ENCODE measurements at regions of chr2 and their contacts with region 1.

Region 1: GRCh38 chr2:32772638-32773447 is 145.0 kb downstream of the TTC27 start:
- DNase-seq: peak; percentile 48
- ATAC-seq: peak; percentile 87
- H3K4me3 ChIP-seq: no peak overlapping the region
- H3K27ac ChIP-seq: no peak overlapping the region
- H3K4me1 ChIP-seq: peaks cover 9% of the 10 kb centered on the region
- H3K27me3 ChIP-seq: no peaks in the 10 kb centered on the region
- CTCF ChIP-seq: peak; percentile 85
- EP300 ChIP-seq: no peak
- POLR2A ChIP-seq: no peak
- RAD21 ChIP-seq: peak; percentile 89

Region 2: GRCh38 chr2:33033606-33034081 is 260.8 kb after region 1 on chr2:
- CTCF ChIA-PET with region 1: no interaction called
- POLR2A ChIA-PET with region 1: no interaction called
- in situ Hi-C with region 1: loop called (anchors 5 kb)
- intact Hi-C with region 1: loop called (anchors 2 kb)
- DNase-seq: no peak
- ATAC-seq: peak; percentile 60; the same call in 2 of the 3 replicates
- H3K4me3 ChIP-seq: no peak overlapping the region
- H3K27ac ChIP-seq: no peak overlapping the region
- H3K4me1 ChIP-seq: no peaks in the 10 kb centered on the region
- H3K27me3 ChIP-seq: peaks cover 0 to 11% of the 10 kb centered on the region in 2 experiments; a peak in 1 of 5 replicates
- CTCF ChIP-seq: peak; percentile 31; the same call in 1 of the 2 replicates
- EP300 ChIP-seq: no peak
- POLR2A ChIP-seq: no peak
- RAD21 ChIP-seq: no peak

Region 3: DNA sequence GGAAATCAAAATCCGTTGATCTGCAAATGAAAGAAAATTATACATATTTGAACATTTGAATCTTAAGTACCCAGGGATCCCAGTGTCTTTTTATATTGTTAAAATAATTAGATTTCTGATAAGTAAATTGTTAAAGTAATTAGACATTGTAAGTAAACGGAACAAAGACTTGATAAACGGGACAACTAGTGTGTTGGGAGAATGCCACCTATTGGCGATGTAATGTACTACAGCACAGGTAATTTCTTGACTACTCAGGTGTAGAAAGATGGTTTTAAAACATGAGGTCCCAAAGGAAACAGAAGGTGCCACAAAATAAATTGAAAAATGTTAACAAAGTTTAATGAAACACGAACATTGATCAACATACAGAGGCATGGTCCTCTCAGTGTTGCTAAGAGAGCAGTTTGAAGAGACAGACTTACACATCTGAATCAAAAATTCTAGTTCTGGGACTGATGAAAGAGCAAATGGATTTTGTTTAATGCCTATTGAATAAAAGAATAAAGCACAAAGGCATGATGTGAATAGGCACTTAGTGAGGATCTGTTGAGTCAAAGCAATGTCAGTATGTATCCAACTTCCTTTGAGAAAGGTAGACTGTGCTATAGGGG is 600.2 kb after region 1 on chr2:
- CTCF ChIA-PET with region 1: interaction called, 13 read pairs
- POLR2A ChIA-PET with region 1: no interaction called
- in situ Hi-C with region 1: loop called (anchors 5 kb)
- intact Hi-C with region 1: loop called (anchors 1 kb)
- DNase-seq: peak; percentile 45
- ATAC-seq: peak; percentile 66
- H3K4me3 ChIP-seq: no peak overlapping the region
- H3K27ac ChIP-seq: no peak overlapping the region
- H3K4me1 ChIP-seq: no peaks in the 10 kb centered on the region
- H3K27me3 ChIP-seq: peaks cover 0 to 3% of the 10 kb centered on the region in 2 experiments; a peak in 1 of 5 replicates
- CTCF ChIP-seq: peak; percentile 80
- EP300 ChIP-seq: no peak
- POLR2A ChIP-seq: no peak
- RAD21 ChIP-seq: peak; percentile 35; the same call in 1 of the 2 replicates

Region 4: GRCh38 chr2:33583194-33583938 is 810.5 kb after region 1 on chr2:
- CTCF ChIA-PET with region 1: no interaction called
- POLR2A ChIA-PET with region 1: no interaction called
- in situ Hi-C with region 1: loop called (anchors 25 kb)
- intact Hi-C with region 1: loop called (anchors 2 kb)
- DNase-seq: peak; percentile 36
- ATAC-seq: peak; percentile 68
- H3K4me3 ChIP-seq: no peak overlapping the region
- H3K27ac ChIP-seq: no peak overlapping the region
- H3K4me1 ChIP-seq: no peaks in the 10 kb centered on the region
- H3K27me3 ChIP-seq: no peaks in the 10 kb centered on the region
- CTCF ChIP-seq: peak; percentile 66
- EP300 ChIP-seq: no peak
- POLR2A ChIP-seq: no peak
- RAD21 ChIP-seq: peak; percentile 56; the same call in 1 of the 2 replicates

Measured in HepG2 (cell line).